CD8-positive, alpha-beta memory T cell (primary cell): ENCODE measurements at regions of chr1 and their contacts with region 1.

Region 1: DNA sequence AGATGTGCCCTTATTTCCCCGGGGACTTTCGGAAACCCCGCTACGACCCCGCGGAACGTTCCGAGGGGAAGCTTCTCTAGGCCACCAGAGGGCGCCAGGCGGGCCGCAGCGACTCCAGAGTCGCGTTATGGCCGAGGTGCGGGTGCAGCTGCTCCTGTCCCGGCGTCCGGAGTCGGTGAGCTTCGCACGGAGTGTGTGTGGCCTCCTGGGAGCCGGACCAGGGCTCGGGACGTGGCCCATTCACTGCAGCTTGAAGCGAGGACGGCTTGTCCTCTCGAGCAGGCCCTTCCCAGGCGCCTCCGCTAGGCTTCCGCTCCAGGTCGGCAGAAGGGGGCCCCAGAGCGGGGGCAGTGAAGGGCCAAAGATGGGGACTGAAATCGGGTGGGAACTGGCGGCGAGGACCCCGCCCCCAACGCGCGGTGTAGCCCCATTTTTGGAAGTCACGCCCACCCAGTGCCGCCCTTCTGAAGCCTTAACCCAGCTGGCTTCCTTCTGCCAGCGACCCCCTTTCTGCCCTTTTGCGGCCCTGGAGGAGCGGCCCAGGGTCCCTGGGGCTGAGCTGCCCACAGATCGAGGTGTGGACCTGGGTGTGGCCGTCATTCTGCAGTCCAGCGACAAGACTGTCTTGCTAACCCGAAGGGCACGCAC is at the start of gene NUDT17:
- DNase-seq: peak; percentile 65 to 84 (median 71)
- H3K4me3 ChIP-seq: peak within 1 kb of the TSS; percentile 75
- H3K4me3 Mint-ChIP-seq: no peak within 1 kb of the TSS
- H3K27ac ChIP-seq: peak within 1 kb of the TSS; percentile 68
- H3K27ac Mint-ChIP-seq: peak within 1 kb of the TSS in 7 of 8 donors; percentile 51 to 89 (median 83)
- H3K4me1 ChIP-seq: peaks cover 10% of the 10 kb centered on the region
- H3K4me1 Mint-ChIP-seq: peaks cover 5 to 7% (median 6%) of the 10 kb centered on the region in 3 donors
- H3K27me3 ChIP-seq: no peaks in the 10 kb centered on the region
- H3K27me3 Mint-ChIP-seq: no peaks in the 10 kb centered on the region
- total RNA-seq, gene NUDT17: 1.6 to 2.2 TPM

Region 2: DNA sequence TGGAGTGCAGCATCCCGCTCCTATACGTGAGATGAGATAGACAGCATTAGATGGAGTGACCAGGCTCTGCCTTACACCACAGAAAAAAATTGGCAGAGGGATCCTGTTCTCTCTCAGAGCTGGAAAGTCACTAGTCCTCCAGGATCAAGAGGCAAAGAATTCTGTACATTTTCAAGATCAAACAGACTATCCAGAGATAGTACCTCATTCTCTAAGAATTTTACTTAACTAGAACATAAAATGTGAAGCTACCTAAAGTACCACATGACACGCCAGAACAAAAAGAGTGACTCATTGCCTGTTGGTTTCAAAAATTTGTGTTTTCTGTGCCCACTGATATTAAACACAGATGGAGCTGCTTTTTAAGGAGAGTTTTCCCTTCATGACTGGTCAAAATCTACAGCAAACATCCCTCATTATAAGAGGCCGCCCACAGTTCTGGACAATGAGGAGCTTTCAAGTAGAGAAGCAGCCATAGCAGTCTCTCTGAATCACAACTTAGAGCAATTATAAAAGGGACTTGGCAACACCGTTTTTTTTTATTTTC is 94.1 kb before region 1 on chr1:
- CTCF ChIA-PET with region 1: no interaction called
- POLR2A ChIA-PET with region 1: no interaction called
- DNase-seq: no peak
- H3K4me3 ChIP-seq: no peak overlapping the region
- H3K4me3 Mint-ChIP-seq: no peak overlapping the region
- H3K27ac ChIP-seq: no peak overlapping the region
- H3K27ac Mint-ChIP-seq: peak overlapping the region in 1 of 8 donors; percentile 23
- H3K4me1 ChIP-seq: no peaks in the 10 kb centered on the region
- H3K4me1 Mint-ChIP-seq: no peaks in the 10 kb centered on the region
- H3K27me3 ChIP-seq: no peaks in the 10 kb centered on the region
- H3K27me3 Mint-ChIP-seq: no peaks in the 10 kb centered on the region

Region 3: GRCh38 chr1:145806408-145806807 is 39.2 kb before region 1 on chr1:
- CTCF ChIA-PET with region 1: no interaction called
- POLR2A ChIA-PET with region 1: no interaction called
- DNase-seq: no peak
- H3K4me3 ChIP-seq: no peak overlapping the region
- H3K4me3 Mint-ChIP-seq: no peak overlapping the region
- H3K27ac ChIP-seq: no peak overlapping the region
- H3K27ac Mint-ChIP-seq: no peak overlapping the region
- H3K4me1 ChIP-seq: peaks cover 10% of the 10 kb centered on the region
- H3K4me1 Mint-ChIP-seq: peaks cover 45 to 63% (median 57%) of the 10 kb centered on the region in 3 donors
- H3K27me3 ChIP-seq: no peaks in the 10 kb centered on the region
- H3K27me3 Mint-ChIP-seq: peaks cover 0 to 2% of the 10 kb centered on the region in 2 donors

Region 4: DNA sequence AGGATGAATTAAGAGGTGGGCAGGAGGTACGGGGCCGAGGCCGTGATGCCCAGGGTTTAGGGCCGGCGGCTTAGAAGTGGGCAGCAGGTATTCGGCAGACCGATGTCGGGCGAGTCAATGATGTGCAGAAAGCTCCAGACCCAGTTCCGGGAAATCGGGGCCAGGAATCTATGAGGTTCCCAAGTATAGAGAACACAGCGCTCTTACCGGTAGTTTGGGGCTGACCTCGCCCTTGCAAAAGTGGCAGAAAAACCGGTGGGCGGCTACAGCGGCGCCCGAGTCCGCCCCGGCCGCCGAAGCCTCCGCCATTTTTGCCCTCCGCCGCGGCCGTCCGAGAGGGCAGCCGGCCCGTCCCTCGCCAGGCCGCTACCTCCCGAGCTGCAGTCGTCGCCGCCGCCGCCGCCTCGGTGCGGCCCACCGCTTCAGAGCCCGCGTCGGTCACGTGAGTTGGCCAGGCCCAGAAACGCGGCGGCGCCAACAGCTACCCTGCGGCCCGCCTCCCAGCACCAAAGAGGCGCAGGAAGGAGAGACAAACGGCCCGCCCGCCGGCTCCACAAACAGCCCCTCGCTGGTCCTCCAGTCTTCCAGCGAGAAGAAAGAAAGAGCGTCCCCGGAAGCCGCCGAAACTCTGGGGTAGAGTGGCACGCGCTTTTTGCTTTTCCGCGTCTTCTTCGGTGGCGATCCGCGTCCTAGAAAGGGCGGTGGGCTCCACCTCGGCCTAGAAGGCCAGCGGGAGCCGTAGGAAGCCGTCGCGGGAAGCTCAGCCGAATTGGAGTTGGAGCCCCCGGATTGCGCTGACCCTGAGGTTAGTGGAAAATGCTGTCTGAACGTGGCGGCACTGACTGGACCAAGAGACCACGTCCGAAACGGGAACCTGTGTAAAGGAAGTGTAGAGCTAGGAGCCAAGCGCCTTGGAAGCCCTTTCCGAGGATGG is 21.8 kb before region 1 on chr1 and contains the starts of genes POLR3C and RNF115:
- CTCF ChIA-PET with region 1: interaction called, 32 read pairs
- POLR2A ChIA-PET with region 1: interaction called, 5 read pairs
- DNase-seq: peak; percentile 79 to 92 (median 84)
- H3K4me3 ChIP-seq: peak within 1 kb of the TSS; percentile 65
- H3K4me3 Mint-ChIP-seq: peak within 1 kb of the TSS; percentile 97 to 100 (median 98)
- H3K27ac ChIP-seq: peak within 1 kb of the TSS; percentile 70
- H3K27ac Mint-ChIP-seq: peak within 1 kb of the TSS; percentile 90 to 98 (median 96)
- H3K4me1 ChIP-seq: peaks cover 21% of the 10 kb centered on the region
- H3K4me1 Mint-ChIP-seq: peaks cover 33 to 47% (median 36%) of the 10 kb centered on the region in 3 donors
- H3K27me3 ChIP-seq: no peaks in the 10 kb centered on the region
- H3K27me3 Mint-ChIP-seq: no peaks in the 10 kb centered on the region
- total RNA-seq, gene POLR3C: 53.1 to 54.1 TPM
- total RNA-seq, gene RNF115: 16.9 to 17.8 TPM

Region 5: DNA sequence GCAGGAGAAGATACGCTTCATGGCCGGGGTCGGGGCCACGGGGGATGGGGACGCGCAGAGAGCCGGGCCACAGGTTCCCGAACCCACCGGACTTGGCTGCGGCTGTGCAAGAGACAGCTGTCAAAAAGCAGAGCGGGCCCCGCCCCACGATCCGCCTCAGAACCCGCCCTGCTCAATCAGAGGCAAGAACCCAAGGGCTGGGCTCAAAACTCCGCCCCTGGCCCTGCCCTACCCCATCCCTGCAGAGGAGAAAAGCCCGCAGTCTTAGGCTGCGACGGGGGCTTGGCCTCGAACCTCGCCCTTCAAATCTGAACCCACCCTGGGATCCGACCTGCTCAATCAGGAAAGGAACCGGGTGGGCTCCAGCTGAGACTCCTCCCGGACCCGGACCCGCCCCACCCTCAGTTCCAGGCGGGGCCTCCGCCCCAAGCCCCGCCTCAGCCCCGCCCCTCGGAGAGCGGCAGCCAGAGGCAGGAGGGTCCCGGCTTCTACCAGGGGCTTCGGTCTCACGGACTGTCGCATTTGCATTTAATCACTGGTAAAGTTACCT is 40.2 kb after region 1 on chr1 and contains the start of gene ANKRD35:
- CTCF ChIA-PET with region 1: interaction called, 29 read pairs
- POLR2A ChIA-PET with region 1: interaction called, 3 read pairs
- DNase-seq: peak; percentile 81 to 89 (median 85)
- H3K4me3 ChIP-seq: peak within 1 kb of the TSS; percentile 74
- H3K4me3 Mint-ChIP-seq: peak within 1 kb of the TSS; percentile 71 to 90 (median 84)
- H3K27ac ChIP-seq: no peak within 1 kb of the TSS
- H3K27ac Mint-ChIP-seq: peak within 1 kb of the TSS in 3 of 8 donors; percentile 1 to 34 (median 17)
- H3K4me1 ChIP-seq: peaks cover 13% of the 10 kb centered on the region
- H3K4me1 Mint-ChIP-seq: peaks cover 16 to 20% (median 18%) of the 10 kb centered on the region in 3 donors
- H3K27me3 ChIP-seq: peaks cover 18% of the 10 kb centered on the region
- H3K27me3 Mint-ChIP-seq: peaks cover 23 to 24% of the 10 kb centered on the region in 2 donors
- total RNA-seq, gene ANKRD35: 0.80 to 1.0 TPM

Region 6: GRCh38 chr1:145918144-145918992 is 72.7 kb after region 1 on chr1 and contains the start of gene PEX11B:
- CTCF ChIA-PET with region 1: interaction called, 13 read pairs
- POLR2A ChIA-PET with region 1: no interaction called
- DNase-seq: peak; percentile 85 to 94 (median 89)
- H3K4me3 ChIP-seq: peak within 1 kb of the TSS; percentile 85
- H3K4me3 Mint-ChIP-seq: peak within 1 kb of the TSS; percentile 90 to 100 (median 97)
- H3K27ac ChIP-seq: peak within 1 kb of the TSS; percentile 68
- H3K27ac Mint-ChIP-seq: peak within 1 kb of the TSS; percentile 83 to 98 (median 96)
- H3K4me1 ChIP-seq: peaks cover 21% of the 10 kb centered on the region
- H3K4me1 Mint-ChIP-seq: peaks cover 52 to 66% (median 60%) of the 10 kb centered on the region in 3 donors
- H3K27me3 ChIP-seq: no peaks in the 10 kb centered on the region
- H3K27me3 Mint-ChIP-seq: no peaks in the 10 kb centered on the region
- total RNA-seq, gene PEX11B: 42.0 to 43.1 TPM

Region 7: GRCh38 chr1:145963995-145964901 is 118.6 kb after region 1 on chr1 and contains the starts of genes ANKRD34A and POLR3GL:
- CTCF ChIA-PET with region 1: interaction called, 18 read pairs
- POLR2A ChIA-PET with region 1: interaction called, 4 read pairs
- DNase-seq: peak; percentile 84 to 95 (median 90)
- H3K4me3 ChIP-seq: peak within 1 kb of the TSS; percentile 88
- H3K4me3 Mint-ChIP-seq: peak within 1 kb of the TSS; percentile 93 to 98 (median 96)
- H3K27ac ChIP-seq: peak within 1 kb of the TSS; percentile 71
- H3K27ac Mint-ChIP-seq: peak within 1 kb of the TSS; percentile 84 to 99 (median 96)
- H3K4me1 ChIP-seq: peaks cover 46% of the 10 kb centered on the region
- H3K4me1 Mint-ChIP-seq: peaks cover 51 to 72% (median 53%) of the 10 kb centered on the region in 3 donors
- H3K27me3 ChIP-seq: no peaks in the 10 kb centered on the region
- H3K27me3 Mint-ChIP-seq: peaks cover 0 to 3% of the 10 kb centered on the region in 2 donors
- total RNA-seq, gene ANKRD34A: 6.9 to 8.7 TPM
- total RNA-seq, gene POLR3GL: 21.6 to 22.8 TPM

Region 8: GRCh38 chr1:146012737-146013403 is 167.2 kb after region 1 on chr1:
- CTCF ChIA-PET with region 1: interaction called, 65 read pairs
- POLR2A ChIA-PET with region 1: interaction called, 3 read pairs
- DNase-seq: peak; percentile 24 to 64 (median 59)
- H3K4me3 ChIP-seq: no peak overlapping the region
- H3K4me3 Mint-ChIP-seq: no peak overlapping the region
- H3K27ac ChIP-seq: no peak overlapping the region
- H3K27ac Mint-ChIP-seq: no peak overlapping the region
- H3K4me1 ChIP-seq: no peaks in the 10 kb centered on the region
- H3K4me1 Mint-ChIP-seq: peaks cover 4 to 12% (median 11%) of the 10 kb centered on the region in 3 donors
- H3K27me3 ChIP-seq: no peaks in the 10 kb centered on the region
- H3K27me3 Mint-ChIP-seq: peaks cover 0 to 13% of the 10 kb centered on the region in 2 donors